ENCODE measurements at regions of chr2 and their contacts with region 1.

Region 1: GRCh38 chr2:163182764-163183354 is 344.3 kb upstream of the KCNH7 start:
- DNase-seq: no peak
- H3K4me3 Mint-ChIP-seq: no peak overlapping the region
- H3K27ac Mint-ChIP-seq: no peak overlapping the region
- H3K4me1 Mint-ChIP-seq: no peaks in the 10 kb centered on the region
- H3K27me3 Mint-ChIP-seq: no peaks in the 10 kb centered on the region
- CTCF ChIP-seq: no peak

Region 2: GRCh38 chr2:163231666-163232065 is 48.8 kb after region 1 on chr2:
- CTCF ChIA-PET with region 1: no interaction called
- intact Hi-C with region 1: no loop called
- DNase-seq: no peak
- H3K4me3 Mint-ChIP-seq: no peak overlapping the region
- H3K27ac Mint-ChIP-seq: no peak overlapping the region
- H3K4me1 Mint-ChIP-seq: no peaks in the 10 kb centered on the region
- H3K27me3 Mint-ChIP-seq: no peaks in the 10 kb centered on the region
- CTCF ChIP-seq: no peak

Region 3: GRCh38 chr2:164495491-164496223 is 1312.8 kb after region 1 on chr2:
- CTCF ChIA-PET with region 1: interaction called, 3 read pairs
- intact Hi-C with region 1: loop called (anchors 5 kb)
- DNase-seq: peak; percentile 28
- H3K4me3 Mint-ChIP-seq: no peak overlapping the region
- H3K27ac Mint-ChIP-seq: no peak overlapping the region
- H3K4me1 Mint-ChIP-seq: peaks cover 9% of the 10 kb centered on the region
- H3K27me3 Mint-ChIP-seq: no peaks in the 10 kb centered on the region
- CTCF ChIP-seq: no peak

Region 4: DNA sequence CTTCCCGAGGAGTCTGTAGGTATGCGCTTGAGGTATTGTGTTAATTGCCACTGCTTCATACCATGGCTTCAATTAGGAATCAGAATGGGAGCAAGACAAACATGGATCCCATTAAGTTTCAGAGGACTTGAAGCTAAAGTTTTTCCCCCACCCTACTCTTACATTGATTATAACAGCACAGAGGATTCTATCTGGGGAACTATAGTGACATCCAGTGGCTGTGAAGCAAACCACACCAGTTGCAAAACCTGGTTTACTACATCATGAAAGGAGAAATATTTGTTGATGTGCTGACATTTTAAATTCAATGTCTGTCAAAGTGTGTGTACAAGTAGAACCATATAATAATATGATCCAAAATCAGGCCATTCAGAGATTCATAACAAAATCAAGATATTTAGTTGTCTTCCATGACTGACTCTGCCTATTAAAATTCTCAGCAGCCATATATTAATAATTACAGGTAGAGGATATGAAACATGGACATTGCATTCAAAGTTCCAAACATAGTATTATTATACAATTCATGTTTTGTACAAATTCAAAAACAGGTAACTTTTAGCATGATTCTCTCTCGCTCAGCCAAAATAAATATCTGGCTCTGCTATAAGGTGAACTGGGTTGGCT is 1355.5 kb after region 1 on chr2:
- CTCF ChIA-PET with region 1: no interaction called
- intact Hi-C with region 1: loop called (anchors 2 kb)
- DNase-seq: peak; percentile 25
- H3K4me3 Mint-ChIP-seq: no peak overlapping the region
- H3K27ac Mint-ChIP-seq: no peak overlapping the region
- H3K4me1 Mint-ChIP-seq: peaks cover 32% of the 10 kb centered on the region
- H3K27me3 Mint-ChIP-seq: no peaks in the 10 kb centered on the region
- CTCF ChIP-seq: peak; percentile 63